MCF 10A (cell line): ENCODE measurements at regions of chr10 and their contacts with region 1.

Region 1: DNA sequence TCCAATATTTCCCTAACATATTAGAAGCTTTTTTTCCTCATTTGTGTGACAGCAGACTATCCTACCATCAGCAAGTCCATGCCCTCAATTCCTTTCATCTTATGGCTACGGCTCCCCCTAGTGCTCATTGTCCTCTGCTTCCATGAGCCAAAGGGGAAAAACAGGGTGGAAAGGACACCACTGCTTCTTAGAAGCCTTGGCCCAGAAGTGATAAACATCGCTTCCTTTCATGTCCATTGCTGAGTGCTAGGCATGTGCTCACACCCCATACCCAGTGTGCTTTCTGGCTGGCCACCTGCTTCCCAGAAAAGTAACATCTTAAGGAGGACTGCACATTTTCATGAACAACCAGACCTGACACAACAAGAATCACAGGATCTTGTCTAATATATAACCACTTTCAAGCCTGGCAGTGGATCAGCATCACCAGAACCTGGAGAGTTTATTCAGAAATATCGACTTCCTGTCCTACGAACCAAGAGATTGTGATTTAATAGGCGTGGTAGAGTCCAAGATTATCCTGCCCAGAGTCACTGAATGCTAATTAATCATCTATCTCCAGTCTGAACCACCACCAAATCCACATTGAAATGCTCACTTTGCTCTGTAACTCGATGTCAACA is 650.5 kb upstream of the SORCS1 start:
- DNase-seq: peak; percentile 83
- H3K4me3 Mint-ChIP-seq: no peak overlapping the region
- H3K27ac Mint-ChIP-seq: no peak overlapping the region
- H3K4me1 Mint-ChIP-seq: peaks cover 6% of the 10 kb centered on the region
- H3K27me3 Mint-ChIP-seq: no peaks in the 10 kb centered on the region
- CTCF ChIP-seq: peak; percentile 68

Region 2: GRCh38 chr10:106625751-106626150 is 1189.2 kb before region 1 on chr10:
- CTCF ChIA-PET with region 1: interaction called, 3 read pairs
- POLR2A ChIA-PET with region 1: no interaction called
- intact Hi-C with region 1: loop called (anchors 10 kb)
- DNase-seq: no peak
- H3K4me3 Mint-ChIP-seq: no peak overlapping the region
- H3K27ac Mint-ChIP-seq: no peak overlapping the region
- H3K4me1 Mint-ChIP-seq: peaks cover 5% of the 10 kb centered on the region
- H3K27me3 Mint-ChIP-seq: no peaks in the 10 kb centered on the region
- CTCF ChIP-seq: no peak

Region 3: DNA sequence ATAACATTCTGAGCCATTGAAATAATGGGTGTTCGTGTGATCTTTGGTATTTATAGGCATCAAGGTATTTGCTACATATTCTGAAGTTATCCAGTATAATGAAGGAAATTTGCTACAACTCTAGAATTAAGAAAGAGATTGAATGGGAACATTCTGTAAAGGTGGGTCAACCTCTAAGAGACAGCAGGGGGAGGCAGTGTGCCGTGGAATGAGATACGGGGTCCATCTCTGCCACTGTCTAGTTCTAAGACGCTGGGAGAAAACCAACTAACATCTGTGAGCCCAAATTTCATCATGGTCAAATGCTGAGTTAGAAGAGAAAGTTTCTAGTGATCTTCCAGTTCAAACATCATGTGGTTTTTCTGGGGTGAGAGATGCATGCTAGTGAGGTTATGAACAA is 1019.4 kb before region 1 on chr10:
- CTCF ChIA-PET with region 1: interaction called, 4 read pairs
- POLR2A ChIA-PET with region 1: no interaction called
- intact Hi-C with region 1: loop called (anchors 1 kb)
- DNase-seq: peak; percentile 64
- H3K4me3 Mint-ChIP-seq: no peak overlapping the region
- H3K27ac Mint-ChIP-seq: no peak overlapping the region
- H3K4me1 Mint-ChIP-seq: peaks cover 6% of the 10 kb centered on the region
- H3K27me3 Mint-ChIP-seq: no peaks in the 10 kb centered on the region
- CTCF ChIP-seq: peak; percentile 52

Region 4: DNA sequence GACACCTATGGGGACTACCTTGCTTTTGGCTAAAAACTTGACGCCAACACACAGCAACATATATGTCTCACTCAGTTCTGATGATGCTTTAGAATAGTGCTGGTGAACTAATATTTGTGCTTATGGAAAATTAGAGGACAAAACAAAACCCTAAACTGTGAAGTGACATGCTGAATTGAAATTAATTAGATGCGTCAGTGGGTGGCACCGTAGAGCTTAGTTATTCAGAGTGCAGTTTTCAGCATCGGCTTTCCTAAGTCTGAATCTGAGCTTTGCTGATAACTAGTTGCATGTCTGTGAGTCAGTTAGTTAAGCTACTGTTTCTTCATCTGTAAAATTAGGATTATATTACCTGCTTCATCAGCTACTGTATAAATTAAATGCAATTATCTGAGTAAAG is 405.5 kb before region 1 on chr10:
- CTCF ChIA-PET with region 1: interaction called, 110 read pairs
- POLR2A ChIA-PET with region 1: no interaction called
- intact Hi-C with region 1: loop called (anchors 1 kb)
- DNase-seq: peak; percentile 63
- H3K4me3 Mint-ChIP-seq: no peak overlapping the region
- H3K27ac Mint-ChIP-seq: no peak overlapping the region
- H3K4me1 Mint-ChIP-seq: peaks cover 7% of the 10 kb centered on the region
- H3K27me3 Mint-ChIP-seq: no peaks in the 10 kb centered on the region
- CTCF ChIP-seq: peak; percentile 55

Region 5: GRCh38 chr10:107616463-107617410 is 198.2 kb before region 1 on chr10:
- CTCF ChIA-PET with region 1: interaction called, 4 read pairs
- POLR2A ChIA-PET with region 1: no interaction called
- intact Hi-C with region 1: loop called (anchors 5 kb)
- DNase-seq: peak; percentile 94
- H3K4me3 Mint-ChIP-seq: peak overlapping the region; percentile 2
- H3K27ac Mint-ChIP-seq: peak overlapping the region; percentile 49
- H3K4me1 Mint-ChIP-seq: peaks cover 43% of the 10 kb centered on the region
- H3K27me3 Mint-ChIP-seq: no peaks in the 10 kb centered on the region
- CTCF ChIP-seq: no peak

Region 6: DNA sequence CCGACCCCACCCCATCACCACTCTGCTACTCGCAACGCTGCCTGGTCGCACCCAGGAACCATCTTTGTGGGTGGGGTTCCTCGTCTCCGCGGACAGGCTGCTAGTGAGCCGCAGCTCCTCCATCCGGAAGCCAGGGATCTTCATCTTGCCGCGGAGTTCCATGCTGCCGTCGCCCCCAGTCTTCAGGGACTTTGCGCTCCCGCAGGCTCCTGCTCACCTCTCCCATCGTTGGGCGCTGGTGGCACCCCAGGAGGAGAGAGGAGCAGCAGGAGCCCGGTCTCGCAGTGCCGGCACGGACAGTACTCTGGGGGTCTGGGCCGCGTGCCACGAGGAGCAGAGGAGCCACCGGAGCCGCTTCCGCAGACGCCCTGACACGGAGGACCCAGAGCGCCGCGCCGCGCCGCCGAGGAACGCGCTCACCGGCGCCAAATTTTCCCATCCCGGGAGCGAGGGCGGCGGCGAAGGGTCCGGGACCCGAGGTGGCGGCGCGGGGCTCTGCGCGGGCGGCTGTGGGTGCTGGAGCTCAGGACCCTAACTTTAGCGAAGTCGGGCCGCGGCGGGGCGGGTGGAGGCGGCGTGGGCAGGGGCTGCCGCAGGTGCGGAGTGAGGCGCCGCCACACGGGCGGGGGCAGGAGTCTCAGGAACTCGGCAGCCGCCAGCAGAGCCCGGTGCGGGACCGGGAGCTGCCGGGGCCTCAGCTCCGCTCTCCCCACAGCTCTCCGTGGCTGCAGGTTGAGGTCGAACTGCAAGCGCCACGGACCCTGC is 99.7 kb after region 1 on chr10:
- CTCF ChIA-PET with region 1: no interaction called
- POLR2A ChIA-PET with region 1: no interaction called
- intact Hi-C with region 1: no loop called
- DNase-seq: peak; percentile 9
- H3K4me3 Mint-ChIP-seq: peak overlapping the region; percentile 68
- H3K27ac Mint-ChIP-seq: no peak overlapping the region
- H3K4me1 Mint-ChIP-seq: peaks cover 9% of the 10 kb centered on the region
- H3K27me3 Mint-ChIP-seq: no peaks in the 10 kb centered on the region
- CTCF ChIP-seq: no peak

Region 7: DNA sequence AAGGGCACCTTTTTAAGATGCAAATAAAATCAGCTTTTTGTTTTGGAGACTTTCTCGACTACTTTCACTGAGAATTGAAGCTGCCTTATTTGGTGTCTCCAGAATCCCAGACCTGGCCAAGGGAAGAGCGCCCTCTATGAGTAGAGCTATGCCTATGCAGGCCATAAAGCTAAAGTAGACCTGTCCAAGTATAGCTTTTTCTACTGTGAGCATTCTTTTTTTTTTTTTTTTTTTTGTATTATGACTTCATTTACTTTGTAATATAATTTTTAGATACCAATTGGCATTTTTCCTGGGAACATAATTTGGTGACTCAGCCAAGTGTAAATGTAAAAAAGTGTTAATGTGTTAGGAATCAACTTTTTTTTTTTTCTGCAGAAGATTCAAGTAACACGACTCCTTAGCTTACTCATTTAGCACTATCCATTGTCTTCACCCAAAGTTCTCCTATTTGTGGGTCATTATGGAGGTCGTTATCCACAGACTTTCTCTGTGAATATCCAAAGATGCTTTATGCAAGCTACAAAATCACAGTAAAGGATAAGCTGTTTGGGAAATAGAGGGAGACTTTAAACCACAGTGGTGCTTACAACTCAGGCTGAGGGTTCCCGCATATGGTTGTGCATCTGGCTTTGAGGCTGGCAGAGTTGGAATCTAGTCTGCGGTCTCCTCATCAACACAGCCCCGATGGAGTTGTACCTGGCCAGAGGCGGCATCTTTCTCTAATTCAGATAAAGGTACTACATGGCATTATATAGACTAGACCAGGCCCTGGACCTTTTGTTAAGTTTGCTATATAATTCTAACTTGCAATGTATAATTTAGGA is 389.7 kb after region 1 on chr10:
- CTCF ChIA-PET with region 1: interaction called, 8 read pairs
- POLR2A ChIA-PET with region 1: no interaction called
- intact Hi-C with region 1: loop called (anchors 2 kb)
- DNase-seq: peak; percentile 59
- H3K4me3 Mint-ChIP-seq: no peak overlapping the region
- H3K27ac Mint-ChIP-seq: no peak overlapping the region
- H3K4me1 Mint-ChIP-seq: no peaks in the 10 kb centered on the region
- H3K27me3 Mint-ChIP-seq: no peaks in the 10 kb centered on the region
- CTCF ChIP-seq: peak; percentile 75